Cardiac septum (tissue), 1 donor: ENCODE measurements at regions of chr15 and their contacts with region 1.

Region 1: GRCh38 chr15:75532413-75533147 is 46.5 kb downstream of the PTPN9 start:
- DNase-seq: no peak

Region 2: GRCh38 chr15:75570126-75570845 is 37.7 kb after region 1 on chr15:
- intact Hi-C with region 1: loop called (anchors 5 kb)
- DNase-seq: no peak